ENCODE measurements at regions of chr7 and their contacts with region 1.

Region 1: GRCh38 chr7:156949541-156950380 is at the start of gene NOM1:
- DNase-seq: peak in 1 of 2 experiments; percentile 93
- H3K4me3 ChIP-seq: peak within 1 kb of the TSS; percentile 93 to 99 (median 96)
- H3K27ac ChIP-seq: peak within 1 kb of the TSS; percentile 83; the same call in 1 of the 2 replicates
- H3K4me1 ChIP-seq: peaks cover under 1 to 10% (median 2%) of the 10 kb centered on the region in 4 experiments; a peak in 6 of 7 replicates
- H3K27me3 ChIP-seq: no peaks in the 10 kb centered on the region
- CTCF ChIP-seq: peak; percentile 72 to 87 (median 83)
- EP300 ChIP-seq: no peak
- POLR2A ChIP-seq: peak in 1 of 2 experiments; percentile 94; a peak in 2 of 3 replicates
- RAD21 ChIP-seq: peak; percentile 46 to 64
- total RNA-seq, gene NOM1: 29.1 and 31.6 TPM in 2 replicates

Region 2: GRCh38 chr7:156783864-156784263 is 165.9 kb before region 1 on chr7:
- CTCF ChIA-PET with region 1: no interaction called
- POLR2A ChIA-PET with region 1: no interaction called
- DNase-seq: no peak
- H3K4me3 ChIP-seq: no peak overlapping the region
- H3K27ac ChIP-seq: no peak overlapping the region
- H3K4me1 ChIP-seq: 0 out of 7 replicates have a peak, but pooled peaks cover 0 to 3% (median 0%) of the 10 kb centered on the region in 4 experiments
- H3K27me3 ChIP-seq: no peaks in the 10 kb centered on the region
- CTCF ChIP-seq: no peak
- EP300 ChIP-seq: no peak
- POLR2A ChIP-seq: no peak
- RAD21 ChIP-seq: no peak

Region 3: DNA sequence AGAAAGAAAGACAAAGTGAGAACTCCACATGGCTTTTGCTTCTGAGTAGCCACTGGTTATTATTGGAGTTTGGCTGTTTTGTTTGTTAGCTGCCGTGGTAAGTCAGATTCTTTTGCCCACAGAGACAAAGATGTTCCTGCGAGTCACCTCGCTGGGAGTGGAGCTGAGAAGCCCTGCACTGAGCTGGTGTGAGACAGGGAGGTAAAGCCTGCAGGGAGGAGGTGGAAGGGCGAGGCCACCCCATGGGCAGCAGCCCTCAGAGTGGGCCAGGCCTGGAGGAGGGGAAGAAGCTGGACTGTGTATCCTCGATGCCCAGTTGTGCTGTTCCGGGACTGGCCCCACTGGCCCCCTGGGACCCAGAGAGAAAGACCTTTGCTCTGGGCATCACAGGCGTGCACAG is 14.5 kb before region 1 on chr7:
- CTCF ChIA-PET with region 1: interaction called, 3 read pairs
- POLR2A ChIA-PET with region 1: interaction called, 18 read pairs
- DNase-seq: no peak
- H3K4me3 ChIP-seq: no peak overlapping the region
- H3K27ac ChIP-seq: no peak overlapping the region; the same call in 1 of the 2 replicates
- H3K4me1 ChIP-seq: peaks cover 0 to 3% (median 0%) of the 10 kb centered on the region in 4 experiments; a peak in 1 of 7 replicates
- H3K27me3 ChIP-seq: no peaks in the 10 kb centered on the region
- CTCF ChIP-seq: no peak
- EP300 ChIP-seq: no peak
- POLR2A ChIP-seq: no peak
- RAD21 ChIP-seq: no peak

Region 4: DNA sequence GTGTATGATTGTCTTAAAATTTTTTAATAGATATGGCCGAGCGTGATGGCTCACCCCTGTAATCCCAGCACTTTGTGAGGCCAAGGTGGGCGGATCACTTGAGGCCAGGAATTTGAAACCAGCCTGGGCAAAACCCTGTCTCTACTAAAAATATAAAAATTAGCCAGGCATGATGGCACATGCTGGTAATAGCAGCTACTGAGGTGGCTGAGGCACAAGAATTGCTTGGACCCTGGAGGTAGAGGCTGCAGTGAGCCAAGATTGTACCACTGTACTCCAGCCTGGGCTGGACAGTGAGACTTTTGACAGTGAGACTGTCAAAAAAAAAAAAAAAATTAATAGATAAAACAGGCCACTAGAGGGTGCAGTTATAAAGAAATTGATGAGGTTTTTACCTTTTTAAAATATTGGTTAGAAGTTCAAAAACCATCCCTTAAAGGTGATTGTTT is 20.2 kb after region 1 on chr7:
- CTCF ChIA-PET with region 1: interaction called, 8 read pairs
- POLR2A ChIA-PET with region 1: interaction called, 10 read pairs
- DNase-seq: no peak
- H3K4me3 ChIP-seq: no peak overlapping the region
- H3K27ac ChIP-seq: no peak overlapping the region
- H3K4me1 ChIP-seq: no peaks in the 10 kb centered on the region
- H3K27me3 ChIP-seq: no peaks in the 10 kb centered on the region
- CTCF ChIP-seq: no peak
- EP300 ChIP-seq: no peak
- POLR2A ChIP-seq: no peak
- RAD21 ChIP-seq: peak in 1 of 2 experiments; percentile 30; a peak in 3 of 4 replicates

Measured in H1 (cell line).